ENCODE measurements at regions of chr11 and their contacts with region 1.

Region 1: DNA sequence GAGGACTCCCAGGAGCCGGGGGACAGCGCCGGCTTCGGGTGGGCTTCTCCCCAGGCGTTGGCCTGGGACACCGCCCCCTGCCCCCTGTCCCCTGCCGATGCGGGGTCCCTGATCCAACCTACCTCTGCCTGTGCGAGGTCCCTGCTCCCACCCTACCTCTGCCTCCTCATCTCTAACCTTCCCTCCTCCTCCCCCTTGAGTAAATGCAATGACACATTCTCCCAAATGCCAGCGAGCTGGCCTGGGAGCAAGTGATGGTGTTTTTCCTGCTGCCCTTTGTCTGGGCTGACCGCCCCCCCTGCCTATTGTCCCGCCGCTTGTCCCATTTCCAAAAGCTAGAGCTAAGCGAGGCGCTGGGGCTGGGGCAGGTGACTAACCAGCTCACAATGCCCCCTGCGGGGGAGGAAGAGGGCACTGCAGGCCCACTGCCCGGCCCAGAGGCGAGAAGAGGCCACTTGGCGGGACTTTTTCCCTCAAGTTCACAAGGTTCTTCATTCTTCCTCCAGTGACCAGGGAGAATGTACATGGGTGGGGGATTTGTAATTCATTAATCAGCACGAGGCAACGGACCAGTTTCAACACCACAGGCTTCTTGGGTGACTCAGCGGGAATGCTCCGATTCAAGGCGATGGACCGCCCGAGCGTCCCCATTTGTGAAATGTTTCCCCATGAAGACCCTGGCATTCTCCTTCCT is 674 bp upstream of the CLCF1 start:
- DNase-seq: peak; percentile 99
- ATAC-seq: peak; percentile 64
- H3K4me3 ChIP-seq: peak overlapping the region; percentile 90
- H3K27ac ChIP-seq: peak overlapping the region; percentile 100
- H3K4me1 ChIP-seq: peaks cover 68% of the 10 kb centered on the region
- H3K27me3 ChIP-seq: no peaks in the 10 kb centered on the region
- CTCF ChIP-seq: peak; percentile 64

Region 2: DNA sequence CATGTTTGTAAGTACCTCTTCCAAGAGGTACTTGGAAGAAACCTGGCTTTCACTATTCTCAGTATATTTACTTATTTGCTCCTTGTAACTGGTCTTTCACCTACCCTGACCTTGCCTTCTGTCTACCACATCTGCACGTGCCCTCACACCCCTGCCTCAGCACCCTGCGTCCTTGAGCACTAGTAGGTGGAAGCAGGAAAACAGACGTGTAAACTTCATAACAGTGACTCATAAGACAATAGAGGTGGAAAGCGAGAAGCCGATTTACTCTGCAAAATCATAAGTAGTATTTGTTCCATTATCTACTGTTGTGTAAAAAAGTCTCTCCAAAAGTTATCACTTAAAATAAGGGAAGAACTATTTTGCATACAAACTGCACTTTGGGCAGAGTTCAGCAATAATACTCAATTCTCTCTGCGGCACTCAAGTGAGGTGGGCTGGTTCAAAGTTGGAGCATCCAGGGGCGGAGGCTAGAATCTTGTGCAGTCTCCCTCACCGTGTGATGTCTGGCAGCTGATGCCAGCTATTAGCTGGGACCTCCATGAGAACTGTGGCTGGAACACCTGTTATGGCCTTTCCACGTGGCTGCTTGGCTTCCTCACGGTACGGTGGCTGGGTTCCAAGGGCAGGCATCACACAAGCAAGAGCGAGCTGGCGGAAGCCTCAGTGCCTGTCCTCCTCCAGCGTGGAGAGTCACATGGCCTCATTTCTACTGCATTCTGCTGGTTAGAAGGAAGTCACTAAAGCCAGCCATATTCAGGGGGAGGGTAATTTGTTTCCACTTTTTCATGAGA is 1273.6 kb before region 1 on chr11:
- CTCF ChIA-PET with region 1: no interaction called
- POLR2A ChIA-PET with region 1: interaction called, 14 read pairs
- intact Hi-C with region 1: no loop called
- DNase-seq: no peak
- ATAC-seq: no peak
- H3K4me3 ChIP-seq: no peak overlapping the region
- H3K27ac ChIP-seq: no peak overlapping the region
- H3K4me1 ChIP-seq: no peaks in the 10 kb centered on the region; the same call in 1 of the 2 replicates
- H3K27me3 ChIP-seq: no peaks in the 10 kb centered on the region
- CTCF ChIP-seq: no peak

Region 3: GRCh38 chr11:67265633-67266423 is 108.2 kb before region 1 on chr11:
- CTCF ChIA-PET with region 1: no interaction called
- POLR2A ChIA-PET with region 1: no interaction called
- intact Hi-C with region 1: loop called (anchors 5 kb)
- DNase-seq: peak; percentile 77
- ATAC-seq: peak; percentile 39
- H3K4me3 ChIP-seq: peak overlapping the region; percentile 57
- H3K27ac ChIP-seq: no peak overlapping the region
- H3K4me1 ChIP-seq: peaks cover 49% of the 10 kb centered on the region
- H3K27me3 ChIP-seq: no peaks in the 10 kb centered on the region
- CTCF ChIP-seq: peak; percentile 68

Region 4: DNA sequence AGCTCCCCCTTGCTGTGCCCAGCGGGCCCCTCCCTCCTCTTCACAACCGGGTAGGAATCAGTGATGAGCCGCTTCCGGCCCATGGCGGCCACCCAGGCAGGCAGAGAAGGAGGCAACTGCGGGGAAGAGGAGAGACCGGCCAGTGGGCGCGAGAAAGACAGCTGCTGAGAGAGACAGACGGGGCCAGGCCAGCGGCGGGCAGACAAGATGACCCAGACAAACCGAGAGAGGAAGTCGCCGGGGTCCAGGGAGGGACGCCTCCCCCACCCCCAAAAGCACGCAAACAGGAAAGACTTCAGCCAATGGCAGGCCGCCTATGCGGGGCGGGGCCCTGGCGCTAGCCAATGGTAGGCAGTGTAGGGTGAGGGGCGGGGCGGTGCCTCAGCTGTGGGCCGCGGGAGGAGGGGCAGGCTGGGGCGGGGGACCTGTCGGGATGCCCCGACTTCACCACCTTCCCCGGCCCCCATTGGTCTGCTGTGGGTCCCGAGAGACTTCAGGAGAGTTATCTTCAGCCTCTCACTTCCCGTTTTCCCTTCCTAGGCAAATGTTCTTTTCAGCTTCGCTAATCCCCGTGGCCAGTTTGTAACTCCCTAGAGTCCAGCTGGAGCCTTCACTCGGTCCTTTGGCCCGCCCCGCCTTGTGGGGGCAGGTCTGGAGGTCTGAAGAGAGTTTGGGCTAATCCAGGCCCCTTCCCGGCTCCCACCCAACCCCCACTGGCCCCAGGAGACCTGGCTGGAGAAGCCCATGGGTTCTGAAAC is 20.6 kb before region 1 on chr11 and contains the start of gene POLD4:
- CTCF ChIA-PET with region 1: interaction called, 41 read pairs
- POLR2A ChIA-PET with region 1: interaction called, 32 read pairs
- intact Hi-C with region 1: loop called (anchors 1 kb)
- DNase-seq: peak; percentile 98
- ATAC-seq: peak; percentile 54
- H3K4me3 ChIP-seq: peak within 1 kb of the TSS; percentile 77
- H3K27ac ChIP-seq: peak within 1 kb of the TSS; percentile 93
- H3K4me1 ChIP-seq: peaks cover 63% of the 10 kb centered on the region
- H3K27me3 ChIP-seq: no peaks in the 10 kb centered on the region
- CTCF ChIP-seq: no peak
- total RNA-seq, gene POLD4: 78.5 and 81.5 TPM in 2 replicates

Region 5: GRCh38 chr11:67401495-67402191 is 27.6 kb after region 1 on chr11 and contains the start of gene PPP1CA:
- CTCF ChIA-PET with region 1: no interaction called
- POLR2A ChIA-PET with region 1: interaction called, 13 read pairs
- intact Hi-C with region 1: no loop called
- DNase-seq: peak; percentile 88
- ATAC-seq: peak; percentile 86
- H3K4me3 ChIP-seq: peak within 1 kb of the TSS; percentile 88
- H3K27ac ChIP-seq: peak within 1 kb of the TSS; percentile 71
- H3K4me1 ChIP-seq: peaks cover 11% of the 10 kb centered on the region
- H3K27me3 ChIP-seq: no peaks in the 10 kb centered on the region
- CTCF ChIP-seq: 0 out of 2 replicates have a peak, but pooled peaks have one; percentile 30
- total RNA-seq, gene PPP1CA: 449 and 477 TPM in 2 replicates

Region 6: GRCh38 chr11:67452141-67452952 is 78.3 kb after region 1 on chr11 and contains the start of gene GPR152:
- CTCF ChIA-PET with region 1: no interaction called
- POLR2A ChIA-PET with region 1: no interaction called
- intact Hi-C with region 1: no loop called
- DNase-seq: no peak
- ATAC-seq: no peak; the same call in 1 of the 2 replicates
- H3K4me3 ChIP-seq: no peak within 1 kb of the TSS
- H3K27ac ChIP-seq: no peak within 1 kb of the TSS
- H3K4me1 ChIP-seq: no peaks in the 10 kb centered on the region
- H3K27me3 ChIP-seq: no peaks in the 10 kb centered on the region
- CTCF ChIP-seq: no peak
- total RNA-seq, gene GPR152: not detected in 2 replicates

Region 7: GRCh38 chr11:67640021-67640757 is 266.1 kb after region 1 on chr11:
- CTCF ChIA-PET with region 1: no interaction called
- POLR2A ChIA-PET with region 1: no interaction called
- intact Hi-C with region 1: no loop called
- DNase-seq: peak; percentile 57
- ATAC-seq: peak; percentile 79
- H3K4me3 ChIP-seq: no peak overlapping the region
- H3K27ac ChIP-seq: no peak overlapping the region
- H3K4me1 ChIP-seq: no peaks in the 10 kb centered on the region
- H3K27me3 ChIP-seq: no peaks in the 10 kb centered on the region
- CTCF ChIP-seq: peak; percentile 79